IMR-90 (cell line): ENCODE measurements at regions of chr3 and their contacts with region 1.

Region 1: GRCh38 chr3:126267226-126267975 is 87.0 kb upstream of the ALDH1L1 start:
- DNase-seq: peak; percentile 91
- ATAC-seq: peak; percentile 88
- H3K4me3 ChIP-seq: peak overlapping the region; percentile 10
- H3K27ac ChIP-seq: peak overlapping the region; percentile 89
- H3K4me1 ChIP-seq: peaks cover 16% of the 10 kb centered on the region
- H3K27me3 ChIP-seq: no peaks in the 10 kb centered on the region
- CTCF ChIP-seq: peak; percentile 27; the same call in 1 of the 2 replicates
- POLR2A ChIP-seq: no peak
- RAD21 ChIP-seq: no peak; the same call in 1 of the 2 replicates

Region 2: GRCh38 chr3:126355777-126356372 is 88.5 kb after region 1 on chr3:
- CTCF ChIA-PET with region 1: no interaction called
- POLR2A ChIA-PET with region 1: no interaction called
- dilution Hi-C with region 1: no loop called
- in situ Hi-C with region 1: no loop called
- intact Hi-C with region 1: loop called (anchors 1 kb)
- DNase-seq: peak; percentile 52
- ATAC-seq: peak; percentile 73
- H3K4me3 ChIP-seq: peak overlapping the region; percentile 33
- H3K27ac ChIP-seq: no peak overlapping the region
- H3K4me1 ChIP-seq: peaks cover 3% of the 10 kb centered on the region; the same call in 1 of the 2 replicates
- H3K27me3 ChIP-seq: peaks cover 28% of the 10 kb centered on the region
- CTCF ChIP-seq: no peak
- POLR2A ChIP-seq: no peak
- RAD21 ChIP-seq: no peak